H1 (cell line): ENCODE measurements at regions of chr7 and their contacts with region 1.

Region 1: DNA sequence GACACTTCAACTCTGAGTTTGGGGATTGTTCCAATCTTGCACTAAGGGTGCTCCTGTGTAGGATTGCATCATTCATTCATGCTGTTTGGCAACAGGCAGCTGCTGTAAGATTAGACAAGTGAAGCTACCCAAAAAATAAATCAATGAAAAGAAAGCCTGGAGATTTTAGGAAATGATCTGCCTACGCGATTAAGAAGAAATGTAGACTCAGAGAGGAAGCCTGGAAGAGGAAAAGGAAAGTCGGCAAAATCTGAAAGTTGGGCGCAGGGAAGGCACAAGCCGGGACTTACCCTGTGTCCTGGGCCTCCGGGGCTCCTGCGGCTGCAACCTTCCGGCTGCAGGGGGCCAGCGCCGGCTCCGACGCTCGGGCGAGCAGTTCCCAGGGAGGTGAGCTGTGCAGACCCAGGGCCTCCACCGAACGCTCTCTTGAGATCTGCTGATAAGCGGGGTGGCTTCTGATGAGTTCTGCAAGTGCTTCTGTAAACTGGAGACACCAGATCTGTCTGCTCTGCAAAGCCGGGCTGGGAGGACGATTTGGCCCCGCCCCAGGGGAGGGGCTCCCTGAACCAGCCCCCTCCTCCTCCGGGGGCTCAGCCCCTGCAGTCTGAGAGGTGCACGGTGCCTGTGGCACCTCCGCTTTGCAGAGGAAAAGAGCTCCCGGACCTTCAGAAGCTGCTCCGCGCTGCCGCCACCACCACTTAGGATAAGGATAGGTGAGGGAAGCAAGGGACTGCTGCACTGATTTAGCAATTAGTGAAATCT is 17.4 kb downstream of the PSPH start:
- DNase-seq: peak; percentile 81 to 91
- H3K4me3 ChIP-seq: peak overlapping the region; percentile 74 to 94 (median 80)
- H3K27ac ChIP-seq: peak overlapping the region; percentile 52
- H3K4me1 ChIP-seq: no peaks in the 10 kb centered on the region
- H3K27me3 ChIP-seq: no peaks in the 10 kb centered on the region
- CTCF ChIP-seq: peak; percentile 17 to 24 (median 18); a peak in 3 of 4 replicates
- EP300 ChIP-seq: no peak
- POLR2A ChIP-seq: peak in 1 of 2 experiments; percentile 87; a peak in 2 of 3 replicates
- RAD21 ChIP-seq: no peak

Region 2: GRCh38 chr7:56019501-56019900 is 14.4 kb before region 1 on chr7:
- CTCF ChIA-PET with region 1: interaction called, 3 read pairs
- POLR2A ChIA-PET with region 1: interaction called, 869 read pairs
- DNase-seq: no peak
- H3K4me3 ChIP-seq: no peak overlapping the region
- H3K27ac ChIP-seq: no peak overlapping the region
- H3K4me1 ChIP-seq: no peaks in the 10 kb centered on the region
- H3K27me3 ChIP-seq: no peaks in the 10 kb centered on the region
- CTCF ChIP-seq: no peak
- EP300 ChIP-seq: no peak
- POLR2A ChIP-seq: no peak
- RAD21 ChIP-seq: no peak

Region 3: GRCh38 chr7:56063882-56064625 is 30.2 kb after region 1 on chr7 and contains the start of gene SUMF2:
- CTCF ChIA-PET with region 1: no interaction called
- POLR2A ChIA-PET with region 1: interaction called, 869 read pairs
- DNase-seq: peak; percentile 89 to 93
- H3K4me3 ChIP-seq: peak within 1 kb of the TSS; percentile 76 to 86 (median 84)
- H3K27ac ChIP-seq: peak within 1 kb of the TSS; percentile 81
- H3K4me1 ChIP-seq: peaks cover 0 to 6% (median 0%) of the 10 kb centered on the region in 4 experiments; a peak in 1 of 7 replicates
- H3K27me3 ChIP-seq: no peaks in the 10 kb centered on the region
- CTCF ChIP-seq: peak in 1 of 3 experiments; percentile 12; a peak in 1 of 4 replicates
- EP300 ChIP-seq: no peak
- POLR2A ChIP-seq: peak; percentile 85 to 90
- RAD21 ChIP-seq: no peak
- total RNA-seq, gene SUMF2: 59.2 and 61.9 TPM in 2 replicates